Common myeloid progenitor, CD34-positive (primary cell): ENCODE measurements at regions of chr1 and their contacts with region 1.

Region 1: GRCh38 chr1:154730259-154730658 is 122.3 kb upstream of the ADAR start:
- DNase-seq: peak in 2 of 3 donors; percentile 59 to 60
- H3K4me3 ChIP-seq: no peak overlapping the region
- H3K27ac ChIP-seq: no peak overlapping the region
- H3K4me1 ChIP-seq: peaks cover 5 to 48% (median 36%) of the 10 kb centered on the region in 4 experiments
- H3K27me3 ChIP-seq: peaks cover 0 to 3% (median 0%) of the 10 kb centered on the region in 5 experiments

Region 2: DNA sequence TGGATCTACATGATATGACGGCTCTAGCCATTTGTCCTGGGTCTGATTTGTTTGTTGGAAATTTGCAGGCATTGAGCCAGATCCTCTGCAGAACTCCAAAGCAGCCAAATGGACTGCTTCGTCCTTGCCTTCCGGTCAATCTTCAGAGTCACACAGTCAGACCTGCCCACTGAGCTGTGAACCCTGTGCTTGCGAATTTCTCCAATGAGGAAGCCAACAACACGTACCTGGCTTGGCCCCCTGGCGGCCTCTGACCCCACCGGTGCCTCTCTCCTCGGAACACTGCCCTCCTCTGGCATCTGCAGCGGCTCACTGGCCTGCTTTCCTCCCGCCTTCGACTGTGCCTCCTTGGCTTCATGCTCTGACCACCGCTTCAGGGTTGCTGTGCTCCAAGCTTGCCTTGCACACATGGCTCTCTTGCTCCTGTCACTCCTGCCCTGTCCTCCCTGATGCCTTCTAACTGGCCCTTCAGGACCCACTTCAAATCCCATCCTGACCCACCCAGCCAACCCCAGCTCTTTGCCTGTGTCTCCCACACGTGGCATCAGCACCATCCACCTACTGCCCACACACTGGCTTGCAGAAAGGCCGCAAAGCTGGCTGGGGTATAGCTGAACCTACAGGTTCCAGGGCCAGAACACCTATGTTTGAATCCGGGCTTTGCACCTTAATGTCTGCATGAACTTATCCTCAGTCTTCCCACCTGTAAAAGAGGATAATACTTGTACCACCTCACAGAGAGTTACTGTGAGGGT is 11.7 kb after region 1 on chr1:
- CTCF ChIA-PET with region 1: interaction called, 12 read pairs
- POLR2A ChIA-PET with region 1: interaction called, 3 read pairs
- DNase-seq: no peak
- H3K4me3 ChIP-seq: no peak overlapping the region
- H3K27ac ChIP-seq: no peak overlapping the region
- H3K4me1 ChIP-seq: peaks cover 0 to 22% (median 7%) of the 10 kb centered on the region in 4 experiments
- H3K27me3 ChIP-seq: no peaks in the 10 kb centered on the region

Region 3: DNA sequence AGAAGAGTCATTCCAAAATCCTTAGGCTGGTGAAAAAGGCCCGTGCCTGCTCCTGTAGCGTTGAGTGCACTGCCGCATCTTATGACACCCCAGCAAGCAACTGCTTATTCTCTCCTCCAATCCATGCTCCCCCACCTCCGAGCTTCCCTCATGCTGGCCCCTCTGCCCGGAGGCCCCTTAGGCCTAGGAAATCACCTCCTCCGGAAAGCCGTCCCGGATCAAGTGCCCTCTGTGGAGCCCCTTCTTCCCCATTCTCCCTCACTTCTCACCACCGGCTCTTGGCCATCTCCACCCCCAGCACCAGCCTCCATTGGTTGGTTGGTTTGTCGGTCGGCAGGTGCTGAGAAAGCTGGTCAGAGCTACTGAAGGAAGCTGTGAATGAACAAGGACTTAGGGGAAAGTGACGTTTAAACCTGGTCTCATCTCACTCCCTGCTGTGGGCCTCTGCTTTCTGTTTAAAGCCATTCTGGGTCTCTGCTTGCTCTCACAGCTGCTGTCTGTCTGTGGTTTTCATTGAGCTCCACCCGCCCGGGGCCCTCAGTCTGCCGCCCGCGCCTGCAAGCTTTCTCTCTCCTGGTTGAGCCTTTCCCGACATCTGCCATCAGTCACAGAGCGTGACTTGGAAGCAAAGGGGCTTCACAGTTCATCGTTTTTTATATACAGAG is 17.6 kb after region 1 on chr1:
- CTCF ChIA-PET with region 1: interaction called, 12 read pairs
- POLR2A ChIA-PET with region 1: interaction called, 4 read pairs
- DNase-seq: peak; percentile 39 to 79 (median 77)
- H3K4me3 ChIP-seq: peak overlapping the region in 5 of 7 experiments; percentile 4 to 54 (median 43)
- H3K27ac ChIP-seq: no peak overlapping the region
- H3K4me1 ChIP-seq: peaks cover 5 to 41% (median 28%) of the 10 kb centered on the region in 4 experiments
- H3K27me3 ChIP-seq: no peaks in the 10 kb centered on the region

Region 4: DNA sequence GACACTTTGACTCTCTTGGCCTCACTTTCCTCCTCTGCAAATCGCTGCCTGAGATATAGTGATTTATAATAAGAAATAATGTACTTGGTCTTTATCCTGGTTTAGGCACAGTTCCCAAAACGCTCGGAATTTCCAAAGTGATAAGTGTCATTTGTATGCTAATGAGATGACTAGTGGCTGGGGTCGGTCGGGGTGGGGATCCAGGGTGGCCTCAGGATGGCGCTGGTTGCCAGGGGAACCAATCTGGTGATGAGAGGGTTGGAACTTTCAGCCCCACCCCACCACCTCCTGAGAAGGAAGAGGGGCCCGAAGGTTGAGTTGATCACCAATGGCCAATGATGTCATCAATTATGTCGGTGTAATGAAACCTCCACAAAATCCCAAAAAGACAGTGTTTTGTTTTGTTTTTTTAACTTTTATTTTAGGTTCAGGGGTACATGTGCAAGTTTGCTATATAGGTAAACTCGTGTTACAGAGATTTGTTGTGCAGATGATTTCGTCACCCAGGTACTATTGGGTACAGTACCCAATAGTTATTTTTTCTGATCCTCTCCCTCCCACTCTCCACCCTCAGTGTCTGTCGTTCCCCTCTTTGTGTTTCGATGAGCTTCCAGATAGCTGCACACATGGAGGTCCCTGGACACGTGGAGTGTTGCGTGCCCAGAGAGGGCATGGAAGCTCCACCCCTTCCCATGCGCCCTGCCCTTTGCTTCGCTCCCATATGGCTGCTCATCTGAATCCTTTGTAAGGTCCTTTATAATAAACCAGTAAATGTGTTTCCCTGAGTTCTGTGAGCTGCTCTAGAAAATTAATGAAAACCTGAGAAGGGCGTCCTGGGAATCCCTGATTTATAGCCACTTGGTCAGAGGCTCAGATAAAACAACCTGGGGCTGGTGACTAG is 42.6 kb after region 1 on chr1:
- CTCF ChIA-PET with region 1: no interaction called
- POLR2A ChIA-PET with region 1: no interaction called
- DNase-seq: no peak
- H3K4me3 ChIP-seq: no peak overlapping the region
- H3K27ac ChIP-seq: no peak overlapping the region
- H3K4me1 ChIP-seq: no peaks in the 10 kb centered on the region
- H3K27me3 ChIP-seq: no peaks in the 10 kb centered on the region

Region 5: GRCh38 chr1:154809436-154810413 is 79.5 kb after region 1 on chr1:
- CTCF ChIA-PET with region 1: no interaction called
- POLR2A ChIA-PET with region 1: no interaction called
- DNase-seq: peak; percentile 45 to 78 (median 74)
- H3K4me3 ChIP-seq: no peak overlapping the region
- H3K27ac ChIP-seq: no peak overlapping the region
- H3K4me1 ChIP-seq: peaks cover 0 to 32% (median 29%) of the 10 kb centered on the region in 4 experiments
- H3K27me3 ChIP-seq: no peaks in the 10 kb centered on the region